ENCODE measurements at regions of chr4 and their contacts with region 1.

Region 1: DNA sequence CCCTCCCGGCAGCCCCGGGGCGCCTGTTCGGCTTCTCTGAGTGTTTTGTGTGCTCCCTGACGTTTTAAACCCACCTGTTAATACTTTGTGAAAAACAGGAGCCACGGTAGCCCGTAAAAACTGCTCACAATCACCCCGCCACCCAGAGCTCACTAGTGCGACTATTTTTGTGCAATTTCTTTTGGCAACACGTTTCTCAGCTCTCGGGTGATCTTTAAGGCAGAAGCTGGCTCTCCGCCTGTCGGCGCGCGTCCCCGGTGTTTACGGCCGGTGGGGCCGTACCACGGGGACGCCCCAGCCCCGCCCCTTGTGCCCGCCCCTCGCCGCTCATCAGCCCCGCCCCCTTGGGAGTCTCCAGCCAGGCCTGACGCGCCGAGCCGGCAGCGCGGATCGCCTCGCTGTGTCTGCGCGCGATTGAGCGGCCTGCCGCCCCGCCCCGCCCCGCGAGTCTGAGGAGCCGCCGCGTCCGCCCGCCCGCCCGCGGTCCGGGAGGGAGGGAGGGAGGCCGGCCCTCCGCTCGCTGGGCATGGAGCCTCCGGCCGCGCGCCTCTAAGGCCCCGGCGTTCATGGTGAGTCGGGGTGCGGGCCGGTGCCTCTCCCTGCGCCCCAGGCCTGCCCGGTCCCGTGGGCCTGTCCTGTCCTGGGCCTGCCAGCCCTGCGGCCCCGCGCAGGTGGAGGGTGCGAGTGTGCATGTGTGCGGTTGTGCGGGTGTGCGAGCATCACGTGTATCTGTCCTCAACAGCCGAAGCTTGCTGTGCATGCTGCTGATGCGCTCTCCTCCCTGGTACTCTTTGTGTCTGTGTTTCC is 56.2 kb upstream of the TADA2B start:
- DNase-seq: peak; percentile 96
- ATAC-seq: peak; percentile 93
- H3K4me3 ChIP-seq: peak overlapping the region; percentile 80 to 93 (median 84)
- H3K4me3 Mint-ChIP-seq: peak overlapping the region; percentile 96
- H3K27ac ChIP-seq: peak overlapping the region; percentile 91 to 95
- H3K27ac Mint-ChIP-seq: peak overlapping the region; percentile 98
- H3K4me1 ChIP-seq: peaks cover 57 to 75% of the 10 kb centered on the region in 2 donors
- H3K4me1 Mint-ChIP-seq: peaks cover 87% of the 10 kb centered on the region
- H3K27me3 ChIP-seq: no peaks in the 10 kb centered on the region
- H3K27me3 Mint-ChIP-seq: no peaks in the 10 kb centered on the region
- CTCF ChIP-seq: no peak

Region 2: GRCh38 chr4:6640292-6641163 is 346.5 kb before region 1 on chr4 and contains the start of gene MRFAP1:
- CTCF ChIA-PET with region 1: no interaction called
- POLR2A ChIA-PET with region 1: no interaction called
- intact Hi-C with region 1: loop called (anchors 1 kb)
- DNase-seq: peak; percentile 97
- ATAC-seq: peak; percentile 87
- H3K4me3 ChIP-seq: peak within 1 kb of the TSS; percentile 83 to 99 (median 96)
- H3K4me3 Mint-ChIP-seq: peak within 1 kb of the TSS; percentile 99
- H3K27ac ChIP-seq: peak within 1 kb of the TSS; percentile 95 to 96
- H3K27ac Mint-ChIP-seq: peak within 1 kb of the TSS; percentile 98
- H3K4me1 ChIP-seq: peaks cover 17 to 25% of the 10 kb centered on the region in 2 donors
- H3K4me1 Mint-ChIP-seq: peaks cover 33% of the 10 kb centered on the region
- H3K27me3 ChIP-seq: no peaks in the 10 kb centered on the region
- H3K27me3 Mint-ChIP-seq: no peaks in the 10 kb centered on the region
- CTCF ChIP-seq: no peak
- total RNA-seq, gene MRFAP1: 100 and 113 TPM in 2 replicates

Region 3: GRCh38 chr4:6709230-6710114 is 277.5 kb before region 1 on chr4 and contains the start of gene MRFAP1L1:
- CTCF ChIA-PET with region 1: no interaction called
- POLR2A ChIA-PET with region 1: interaction called, 3 read pairs
- intact Hi-C with region 1: loop called (anchors 2 kb)
- DNase-seq: peak; percentile 97
- ATAC-seq: peak; percentile 83
- H3K4me3 ChIP-seq: peak within 1 kb of the TSS; percentile 72 to 90 (median 77)
- H3K4me3 Mint-ChIP-seq: peak within 1 kb of the TSS; percentile 99
- H3K27ac ChIP-seq: peak within 1 kb of the TSS; percentile 80 to 83
- H3K27ac Mint-ChIP-seq: peak within 1 kb of the TSS; percentile 98
- H3K4me1 ChIP-seq: peaks cover 32 to 36% of the 10 kb centered on the region in 2 donors
- H3K4me1 Mint-ChIP-seq: peaks cover 57% of the 10 kb centered on the region
- H3K27me3 ChIP-seq: no peaks in the 10 kb centered on the region
- H3K27me3 Mint-ChIP-seq: no peaks in the 10 kb centered on the region
- CTCF ChIP-seq: no peak
- total RNA-seq, gene MRFAP1L1: 53.8 and 57.2 TPM in 2 replicates

Region 4: GRCh38 chr4:6783053-6783981 is 203.7 kb before region 1 on chr4:
- CTCF ChIA-PET with region 1: no interaction called
- POLR2A ChIA-PET with region 1: no interaction called
- intact Hi-C with region 1: loop called (anchors 1 kb)
- DNase-seq: peak; percentile 92
- ATAC-seq: peak; percentile 62
- H3K4me3 ChIP-seq: peak overlapping the region; percentile 35 to 90 (median 80)
- H3K4me3 Mint-ChIP-seq: peak overlapping the region; percentile 87
- H3K27ac ChIP-seq: peak overlapping the region; percentile 88 to 97
- H3K27ac Mint-ChIP-seq: peak overlapping the region; percentile 87
- H3K4me1 ChIP-seq: peaks cover 11 to 13% of the 10 kb centered on the region in 2 donors
- H3K4me1 Mint-ChIP-seq: peaks cover 28% of the 10 kb centered on the region
- H3K27me3 ChIP-seq: no peaks in the 10 kb centered on the region
- H3K27me3 Mint-ChIP-seq: no peaks in the 10 kb centered on the region
- CTCF ChIP-seq: peak; percentile 7

Region 5: DNA sequence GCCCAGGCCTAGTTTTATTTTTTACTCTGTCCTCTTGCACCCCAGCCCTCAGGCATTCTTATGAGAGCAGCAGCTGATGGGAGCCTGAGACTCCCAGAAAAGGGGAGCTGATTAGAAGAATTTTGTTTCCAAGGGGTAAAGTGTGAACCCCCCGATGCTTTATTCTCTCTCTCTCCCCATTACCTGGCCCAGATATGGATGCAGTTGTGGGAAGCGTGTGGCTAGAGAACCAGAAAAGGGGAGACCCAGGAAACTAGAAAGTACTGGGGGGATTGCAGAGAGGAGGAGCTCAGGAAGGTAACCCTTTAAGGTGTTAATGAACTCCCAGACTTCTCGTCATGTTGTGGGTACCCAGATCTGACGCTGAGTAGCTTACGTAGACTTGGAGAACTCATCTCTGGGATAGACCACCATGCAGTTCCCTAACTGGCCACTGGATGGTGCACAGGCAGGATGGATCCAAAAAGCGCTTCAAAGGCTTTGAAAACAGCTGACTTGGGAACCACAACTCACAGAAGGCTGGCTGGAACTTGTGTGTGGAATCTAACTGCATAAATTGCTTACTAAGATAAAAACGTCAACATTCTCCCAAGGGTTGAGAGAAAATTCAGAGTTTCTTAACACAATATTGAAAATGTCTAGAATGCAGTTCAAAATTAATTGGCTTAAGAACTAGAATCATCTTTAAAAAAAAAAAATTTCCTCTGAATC is 12.7 kb before region 1 on chr4:
- CTCF ChIA-PET with region 1: interaction called, 20 read pairs
- POLR2A ChIA-PET with region 1: interaction called, 6 read pairs
- intact Hi-C with region 1: loop called (anchors 1 kb)
- DNase-seq: peak; percentile 84
- ATAC-seq: peak; percentile 90
- H3K4me3 ChIP-seq: no peak overlapping the region
- H3K4me3 Mint-ChIP-seq: no peak overlapping the region
- H3K27ac ChIP-seq: no peak overlapping the region
- H3K27ac Mint-ChIP-seq: no peak overlapping the region
- H3K4me1 ChIP-seq: peaks cover 31 to 35% of the 10 kb centered on the region in 2 donors
- H3K4me1 Mint-ChIP-seq: peaks cover 33% of the 10 kb centered on the region
- H3K27me3 ChIP-seq: no peaks in the 10 kb centered on the region
- H3K27me3 Mint-ChIP-seq: no peaks in the 10 kb centered on the region
- CTCF ChIP-seq: peak; percentile 96

Region 6: GRCh38 chr4:7042697-7043464 is 55.9 kb after region 1 on chr4 and contains the start of gene TADA2B:
- CTCF ChIA-PET with region 1: interaction called, 7 read pairs
- POLR2A ChIA-PET with region 1: interaction called, 8 read pairs
- intact Hi-C with region 1: loop called (anchors 1 kb)
- DNase-seq: peak; percentile 95
- ATAC-seq: peak; percentile 87
- H3K4me3 ChIP-seq: peak within 1 kb of the TSS; percentile 51 to 96 (median 95)
- H3K4me3 Mint-ChIP-seq: peak within 1 kb of the TSS; percentile 97
- H3K27ac ChIP-seq: peak within 1 kb of the TSS; percentile 68 to 85
- H3K27ac Mint-ChIP-seq: peak within 1 kb of the TSS; percentile 92
- H3K4me1 ChIP-seq: peaks cover 31 to 48% of the 10 kb centered on the region in 2 donors
- H3K4me1 Mint-ChIP-seq: peaks cover 50% of the 10 kb centered on the region
- H3K27me3 ChIP-seq: no peaks in the 10 kb centered on the region
- H3K27me3 Mint-ChIP-seq: no peaks in the 10 kb centered on the region
- CTCF ChIP-seq: peak; percentile 27
- total RNA-seq, gene TADA2B: 38.5 and 41.5 TPM in 2 replicates